Right ventricle myocardium superior (tissue), 1 donor: ENCODE measurements at regions of chr7 and their contacts with region 1.

Region 1: DNA sequence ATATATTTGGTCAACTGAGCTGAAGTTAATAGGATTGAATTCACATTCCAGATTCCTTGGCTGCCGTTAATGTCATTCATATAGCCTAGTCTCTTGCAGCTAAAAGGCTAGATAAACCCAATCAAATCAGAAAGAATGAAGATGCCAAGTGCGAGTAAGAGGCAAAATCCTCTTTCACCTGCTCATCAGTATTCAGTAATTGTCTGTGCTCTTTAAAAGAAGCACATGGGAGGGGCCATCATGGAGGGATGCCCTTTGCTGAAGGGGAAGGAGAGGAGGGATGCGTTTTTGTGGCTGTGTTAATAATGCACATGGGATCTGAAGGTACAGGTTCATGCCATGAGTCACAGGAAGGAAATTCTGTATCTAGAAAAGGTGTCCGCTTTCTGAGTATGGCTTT is 232.2 kb downstream of the TMEM178B start:
- DNase-seq: no peak
- ATAC-seq: no peak

Region 2: DNA sequence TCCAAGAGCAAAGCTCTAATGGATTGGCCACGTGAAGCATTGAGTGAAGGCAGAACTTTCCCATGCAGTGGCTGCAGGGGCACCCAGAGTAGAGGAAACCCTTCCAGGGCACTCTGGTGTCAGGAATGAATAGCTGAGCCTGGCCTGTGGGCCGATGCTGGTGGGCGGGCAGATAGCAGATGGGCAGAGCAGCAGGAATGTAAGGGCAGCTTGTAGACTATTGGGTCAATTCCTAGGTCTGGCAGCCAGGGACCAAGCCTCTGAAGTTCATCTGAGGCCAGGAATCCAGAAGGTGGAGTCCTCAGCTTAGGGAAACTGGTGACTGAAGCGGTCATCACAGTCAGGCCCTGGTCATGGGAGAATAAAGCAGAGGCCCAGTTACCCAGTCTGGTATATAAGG is 116.8 kb before region 1 on chr7:
- intact Hi-C with region 1: no loop called
- DNase-seq: no peak
- ATAC-seq: no peak

Region 3: GRCh38 chr7:141362580-141363435 is 56.7 kb after region 1 on chr7:
- intact Hi-C with region 1: loop called (anchors 5 kb)
- DNase-seq: no peak
- ATAC-seq: peak; percentile 48

Region 4: DNA sequence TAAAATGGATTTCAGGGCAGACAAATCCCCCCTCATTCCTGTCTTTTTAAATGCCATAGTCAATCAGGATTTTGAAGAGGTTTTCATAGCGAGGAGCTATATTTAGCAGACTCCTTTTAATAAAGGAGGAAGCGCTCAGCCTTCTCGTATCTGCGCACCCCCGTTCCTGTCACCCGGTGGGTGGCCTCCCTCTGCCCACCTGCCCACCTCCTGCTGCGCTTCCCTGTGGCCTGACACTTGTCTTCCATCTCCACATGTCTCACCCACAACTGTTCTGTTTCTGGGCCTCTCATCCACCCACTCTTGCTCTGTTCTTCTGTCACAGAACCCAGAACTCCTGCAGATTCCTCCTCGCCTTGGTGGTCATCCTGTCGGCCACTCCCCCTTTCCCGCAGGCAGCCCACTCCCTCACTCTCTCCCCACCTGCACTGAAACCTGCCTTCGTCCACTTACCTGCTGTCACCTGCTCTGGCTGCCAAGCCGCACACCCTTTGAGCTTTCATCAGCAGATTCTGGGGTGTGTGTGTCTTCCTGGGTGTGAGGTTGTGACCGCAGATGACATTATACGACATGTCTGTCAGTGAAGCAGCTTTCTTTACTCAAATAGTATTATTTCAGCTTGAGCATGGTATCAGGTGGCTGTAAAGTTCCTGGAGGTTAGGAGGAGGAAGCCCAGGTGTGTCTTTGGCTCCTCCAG is 81.6 kb after region 1 on chr7:
- intact Hi-C with region 1: no loop called
- DNase-seq: no peak
- ATAC-seq: peak; percentile 28

Region 5: GRCh38 chr7:141430455-141431137 is 124.5 kb after region 1 on chr7:
- intact Hi-C with region 1: no loop called
- DNase-seq: no peak
- ATAC-seq: peak; percentile 60

Region 6: GRCh38 chr7:141844256-141844655 is 538.2 kb after region 1 on chr7:
- intact Hi-C with region 1: no loop called
- DNase-seq: no peak
- ATAC-seq: no peak